ENCODE measurements at regions of chr1 and their contacts with region 1.

Region 1: GRCh38 chr1:44652445-44653106 is 21.7 kb downstream of the TMEM53 start:
- DNase-seq: peak; percentile 79 to 88
- ATAC-seq: peak; percentile 87 to 91 (median 89)
- H3K4me3 ChIP-seq: no peak overlapping the region
- H3K27ac ChIP-seq: no peak overlapping the region
- H3K4me1 ChIP-seq: peaks cover 3% of the 10 kb centered on the region
- H3K27me3 ChIP-seq: no peaks in the 10 kb centered on the region
- CTCF ChIP-seq: peak; percentile 94

Region 2: DNA sequence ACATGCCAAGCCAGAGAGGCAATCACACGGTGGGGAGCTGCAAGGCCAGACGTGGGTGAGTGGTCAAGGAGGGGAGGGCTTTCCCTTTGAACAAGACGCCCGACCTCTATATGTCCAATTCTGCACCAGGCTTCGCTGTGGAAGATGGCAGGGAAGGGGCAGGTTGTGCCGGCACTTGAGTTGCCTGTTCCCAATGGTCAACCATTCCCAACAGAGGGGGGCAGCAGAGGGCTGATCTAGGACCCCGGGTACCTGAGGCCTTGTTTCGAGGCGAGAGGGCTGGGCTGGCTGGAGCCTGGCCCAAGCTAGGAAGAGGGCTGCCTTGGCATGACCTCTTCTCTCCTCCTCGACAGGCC is 43.2 kb before region 1 on chr1:
- intact Hi-C with region 1: loop called (anchors 1 to 2 kb)
- DNase-seq: peak; percentile 57 to 82
- ATAC-seq: peak; percentile 92 to 97 (median 94)
- H3K4me3 ChIP-seq: no peak overlapping the region
- H3K27ac ChIP-seq: no peak overlapping the region
- H3K4me1 ChIP-seq: no peaks in the 10 kb centered on the region
- H3K27me3 ChIP-seq: peaks cover 0 to 3% (median 0%) of the 10 kb centered on the region in 3 donors
- CTCF ChIP-seq: peak; percentile 72

Measured in psoas muscle (tissue), 8 donors.